Heart left ventricle (tissue), 16 donors: ENCODE measurements at regions of chr7 and their contacts with region 1.

Region 1: GRCh38 chr7:22854158-22855048 is 31.8 kb upstream of the TOMM7 start:
- DNase-seq: peak; percentile 88 to 96 (median 93)
- ATAC-seq: peak; percentile 73 to 93 (median 86)
- H3K4me3 ChIP-seq: peak overlapping the region; percentile 40 to 91 (median 82)
- H3K27ac ChIP-seq: peak overlapping the region; percentile 83 to 98 (median 96)
- H3K4me1 ChIP-seq: peaks cover 0 to 45% (median 20%) of the 10 kb centered on the region in 12 donors
- H3K27me3 ChIP-seq: no peaks in the 10 kb centered on the region
- CTCF ChIP-seq: peak in 11 of 12 donors; percentile 67 to 96 (median 93)
- POLR2A ChIP-seq: peak in 1 of 2 donors; percentile 74

Region 2: GRCh38 chr7:22822486-22823141 is 31.8 kb before region 1 on chr7 and contains the start of gene TOMM7:
- intact Hi-C with region 1: loop called in 3 of 10 experiments (anchors 2 to 5 kb)
- DNase-seq: peak; percentile 91 to 94 (median 93)
- ATAC-seq: peak; percentile 96 to 98 (median 96)
- H3K4me3 ChIP-seq: peak within 1 kb of the TSS; percentile 56 to 97 (median 80)
- H3K27ac ChIP-seq: peak within 1 kb of the TSS in 11 of 12 donors; percentile 66 to 91 (median 85)
- H3K4me1 ChIP-seq: peaks cover 0 to 37% (median 20%) of the 10 kb centered on the region in 12 donors
- H3K27me3 ChIP-seq: no peaks in the 10 kb centered on the region
- CTCF ChIP-seq: peak; percentile 8 to 70 (median 54)
- POLR2A ChIP-seq: peak in 1 of 2 donors; percentile 70
- total RNA-seq, gene TOMM7: 137 to 529 (median 399) TPM

Region 3: DNA sequence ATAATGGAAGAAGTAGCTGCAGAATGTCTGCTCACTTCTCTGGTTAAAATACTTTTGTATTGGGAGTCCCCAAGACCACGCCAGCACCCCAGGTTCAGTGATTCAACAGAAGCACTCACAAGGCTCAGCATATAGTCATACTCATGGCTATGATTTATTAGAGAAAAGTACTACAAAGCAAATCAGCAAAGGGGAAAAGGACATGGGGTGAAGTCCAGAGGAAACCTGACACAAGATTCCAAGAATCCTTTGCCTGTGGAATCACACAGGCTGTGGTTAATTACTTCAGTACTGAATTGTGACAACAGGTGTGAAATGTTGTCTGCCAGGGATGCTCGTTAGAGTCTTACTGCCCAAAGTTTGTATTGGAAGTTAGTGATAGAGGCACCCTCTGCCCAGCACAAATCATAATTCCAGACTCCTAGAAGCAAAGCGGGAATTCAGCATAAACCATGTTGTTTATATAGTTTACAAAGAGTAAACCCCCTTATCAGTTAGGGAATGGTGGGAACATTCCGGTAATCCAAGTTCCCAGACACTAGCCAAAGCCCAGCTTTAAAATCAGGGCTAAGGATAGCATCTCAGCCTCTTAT is 80.2 kb after region 1 on chr7:
- intact Hi-C with region 1: loop called in 1 of 10 experiments (anchors 5 kb)
- DNase-seq: no peak
- ATAC-seq: no peak
- H3K4me3 ChIP-seq: no peak overlapping the region
- H3K27ac ChIP-seq: peak overlapping the region in 5 of 12 donors; percentile 4 to 55 (median 18)
- H3K4me1 ChIP-seq: peaks cover 0 to 15% (median 0%) of the 10 kb centered on the region in 12 donors
- H3K27me3 ChIP-seq: no peaks in the 10 kb centered on the region
- CTCF ChIP-seq: no peak
- POLR2A ChIP-seq: no peak

Region 4: GRCh38 chr7:22949944-22950343 is 95.5 kb after region 1 on chr7:
- intact Hi-C with region 1: loop called in 2 of 10 experiments (anchors 10 kb)
- DNase-seq: no peak
- ATAC-seq: peak in 1 of 4 donors; percentile 42
- H3K4me3 ChIP-seq: no peak overlapping the region
- H3K27ac ChIP-seq: no peak overlapping the region
- H3K4me1 ChIP-seq: peaks cover 0 to 18% (median 0%) of the 10 kb centered on the region in 12 donors
- H3K27me3 ChIP-seq: no peaks in the 10 kb centered on the region
- CTCF ChIP-seq: no peak
- POLR2A ChIP-seq: no peak

Region 5: GRCh38 chr7:22962775-22963358 is 108.5 kb after region 1 on chr7:
- intact Hi-C with region 1: loop called in 3 of 10 experiments (anchors 10 kb)
- DNase-seq: no peak
- ATAC-seq: no peak
- H3K4me3 ChIP-seq: no peak overlapping the region
- H3K27ac ChIP-seq: no peak overlapping the region
- H3K4me1 ChIP-seq: no peaks in the 10 kb centered on the region
- H3K27me3 ChIP-seq: no peaks in the 10 kb centered on the region
- CTCF ChIP-seq: no peak
- POLR2A ChIP-seq: no peak

Region 6: DNA sequence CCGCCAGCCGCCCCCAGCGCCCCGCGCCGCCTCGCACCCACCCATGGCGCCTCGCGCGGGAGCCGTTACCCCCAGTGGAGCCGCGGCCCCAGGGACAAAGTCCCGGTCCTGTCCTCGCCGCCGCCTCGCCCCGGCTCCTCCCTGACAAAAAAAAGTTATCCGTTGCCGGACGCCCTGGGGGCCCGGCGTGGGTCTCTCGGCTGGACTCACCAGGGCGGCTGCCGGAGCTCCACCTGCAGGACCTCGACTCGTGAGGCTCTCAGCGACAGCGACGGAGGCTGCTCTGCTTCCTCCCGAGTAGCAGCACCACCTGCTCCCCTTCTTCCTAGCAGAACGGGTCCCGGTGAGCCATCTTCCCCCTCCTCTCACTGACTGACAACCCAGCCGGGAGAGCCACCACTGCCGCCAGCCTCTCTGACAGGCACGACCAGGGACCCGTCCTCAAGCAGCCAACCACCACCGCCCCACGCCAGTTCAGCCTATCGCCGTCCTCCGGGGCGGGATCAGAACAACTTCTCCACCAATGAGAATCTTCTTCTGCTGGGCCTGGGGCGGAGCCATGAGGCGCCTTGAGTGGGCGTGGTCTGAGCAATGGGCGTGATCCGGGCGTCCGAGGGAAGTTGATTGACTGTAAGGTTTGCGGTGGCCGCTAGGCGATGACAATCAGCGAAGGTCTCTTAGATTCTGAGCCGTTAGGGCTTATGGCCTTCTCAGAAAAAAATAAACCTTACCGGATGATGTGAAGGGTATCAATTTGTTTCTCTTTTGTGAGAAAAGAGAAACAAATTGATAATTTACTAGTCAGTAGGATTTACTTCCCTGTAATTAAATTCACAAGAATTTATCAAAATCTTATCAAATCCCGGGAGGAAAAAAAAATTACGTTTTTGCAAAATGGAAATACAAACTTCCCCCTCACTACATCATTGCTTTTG is 159.6 kb after region 1 on chr7 and contains the start of gene HYCC1:
- intact Hi-C with region 1: loop called in 5 of 10 experiments (anchors 5 to 10 kb)
- DNase-seq: peak; percentile 99
- ATAC-seq: peak; percentile 100
- H3K4me3 ChIP-seq: peak within 1 kb of the TSS; percentile 73 to 94 (median 84)
- H3K27ac ChIP-seq: peak within 1 kb of the TSS; percentile 58 to 87 (median 84)
- H3K4me1 ChIP-seq: peaks cover 2 to 77% (median 35%) of the 10 kb centered on the region in 12 donors
- H3K27me3 ChIP-seq: no peaks in the 10 kb centered on the region
- CTCF ChIP-seq: peak; percentile 46 to 77 (median 62)
- POLR2A ChIP-seq: peak; percentile 98 to 100
- total RNA-seq, gene HYCC1: 31.4 to 48.2 (median 35.6) TPM